ENCODE measurements at regions of chr1 and their contacts with region 1.

Region 1: DNA sequence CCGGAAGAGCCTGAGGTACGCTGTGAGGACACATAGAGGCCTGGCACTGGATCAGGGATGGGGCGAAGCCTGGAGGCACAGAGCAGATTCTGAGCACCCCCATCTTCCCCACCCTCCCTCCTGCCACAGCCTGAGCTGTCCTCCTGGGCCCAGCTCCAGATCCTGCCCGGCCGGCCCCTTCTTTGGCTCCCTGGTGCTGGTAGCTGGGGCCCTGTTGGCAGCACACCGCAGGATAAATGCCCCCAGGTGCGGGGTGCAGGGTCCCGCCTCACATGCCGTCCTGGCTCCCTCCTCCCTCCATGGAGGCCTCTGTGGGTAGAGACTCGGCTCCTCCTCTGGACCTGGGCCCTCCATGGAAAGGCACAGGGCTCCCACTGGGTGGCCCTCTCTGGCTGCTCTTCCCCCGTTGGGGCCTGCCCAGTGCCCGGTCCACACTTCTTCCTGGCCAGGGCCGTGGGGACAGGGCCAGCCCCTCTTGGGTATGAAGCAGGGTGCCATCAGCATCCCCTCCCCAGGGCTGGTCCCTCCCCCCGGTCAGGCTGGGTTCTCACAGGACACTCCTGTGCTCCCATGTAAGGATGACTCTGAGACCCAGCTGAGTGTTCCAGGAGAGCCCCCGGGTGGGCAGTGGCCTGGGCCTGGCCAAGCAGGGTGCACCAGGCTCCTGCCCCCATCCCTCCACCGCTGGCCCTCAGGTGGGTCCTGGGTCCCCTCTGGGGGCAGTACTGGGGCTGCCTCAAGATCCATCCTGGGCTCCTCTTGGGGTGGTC is 1.1 kb upstream of the OBSCN start:
- DNase-seq: no peak
- ATAC-seq: no peak
- H3K4me3 ChIP-seq: no peak overlapping the region
- H3K4me3 Mint-ChIP-seq: no peak overlapping the region
- H3K27ac ChIP-seq: no peak overlapping the region
- H3K27ac Mint-ChIP-seq: no peak overlapping the region
- H3K4me1 ChIP-seq: no peaks in the 10 kb centered on the region
- H3K4me1 Mint-ChIP-seq: no peaks in the 10 kb centered on the region
- H3K27me3 ChIP-seq: peaks cover 0 to 5% of the 10 kb centered on the region in 2 experiments
- H3K27me3 Mint-ChIP-seq: peaks cover 20% of the 10 kb centered on the region
- CTCF ChIP-seq: no peak

Region 2: GRCh38 chr1:228154670-228155571 is 51.8 kb before region 1 on chr1:
- CTCF ChIA-PET with region 1: no interaction called
- POLR2A ChIA-PET with region 1: no interaction called
- intact Hi-C with region 1: no loop called
- DNase-seq: peak in 1 of 14 experiments; percentile 44
- ATAC-seq: peak; percentile 82
- H3K4me3 ChIP-seq: no peak overlapping the region
- H3K4me3 Mint-ChIP-seq: peak overlapping the region; percentile 14
- H3K27ac ChIP-seq: no peak overlapping the region
- H3K27ac Mint-ChIP-seq: peak overlapping the region; percentile 88
- H3K4me1 ChIP-seq: peaks cover 15% of the 10 kb centered on the region
- H3K4me1 Mint-ChIP-seq: peaks cover 12% of the 10 kb centered on the region
- H3K27me3 ChIP-seq: no peaks in the 10 kb centered on the region
- H3K27me3 Mint-ChIP-seq: no peaks in the 10 kb centered on the region
- CTCF ChIP-seq: no peak

Region 3: DNA sequence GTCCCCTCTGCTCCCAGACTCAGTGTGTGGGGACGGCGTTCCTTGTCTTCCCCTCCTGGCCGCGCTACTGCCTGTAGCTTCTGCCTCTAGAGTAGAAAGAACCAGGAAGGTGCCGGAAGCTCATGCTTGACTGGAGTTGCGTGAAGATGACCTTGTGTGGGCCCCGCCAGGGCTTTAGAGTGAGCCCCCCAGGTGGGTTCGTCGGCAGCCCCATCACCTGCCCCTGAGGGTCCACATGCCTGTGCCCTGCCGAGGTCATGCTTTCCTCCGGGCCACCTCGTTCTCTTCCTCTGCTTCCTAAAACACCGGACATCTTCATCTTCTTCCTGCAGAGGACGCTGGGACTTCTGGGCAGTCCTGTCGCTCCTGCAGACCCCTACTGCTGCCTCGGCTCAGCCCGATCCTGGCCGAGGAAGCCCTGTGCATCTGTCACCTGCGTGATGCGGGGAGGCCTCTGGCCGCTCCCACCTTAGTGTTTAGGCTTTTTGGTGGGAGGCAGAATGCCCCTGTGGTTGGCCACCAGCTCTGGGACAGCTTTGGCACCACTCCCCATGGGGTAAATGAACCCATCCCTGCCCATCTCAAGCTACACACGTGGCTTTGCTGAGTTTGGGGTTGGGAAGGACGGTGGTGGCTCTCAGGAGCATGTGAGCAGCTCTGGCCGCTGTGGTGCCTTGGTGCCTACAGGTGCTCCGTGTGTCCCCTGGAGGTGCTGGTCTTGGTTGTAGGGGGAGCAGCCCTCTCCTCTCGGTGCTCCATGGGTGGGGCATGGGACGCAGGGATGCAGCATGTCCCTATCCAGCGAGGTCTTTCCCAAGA is 13.4 kb after region 1 on chr1:
- CTCF ChIA-PET with region 1: no interaction called
- POLR2A ChIA-PET with region 1: no interaction called
- intact Hi-C with region 1: loop called in 1 of 2 experiments (anchors 2 kb)
- DNase-seq: no peak
- ATAC-seq: no peak
- H3K4me3 ChIP-seq: no peak overlapping the region
- H3K4me3 Mint-ChIP-seq: no peak overlapping the region
- H3K27ac ChIP-seq: no peak overlapping the region
- H3K27ac Mint-ChIP-seq: no peak overlapping the region
- H3K4me1 ChIP-seq: no peaks in the 10 kb centered on the region
- H3K4me1 Mint-ChIP-seq: peaks cover 13% of the 10 kb centered on the region
- H3K27me3 ChIP-seq: no peaks in the 10 kb centered on the region
- H3K27me3 Mint-ChIP-seq: no peaks in the 10 kb centered on the region
- CTCF ChIP-seq: no peak

Region 4: DNA sequence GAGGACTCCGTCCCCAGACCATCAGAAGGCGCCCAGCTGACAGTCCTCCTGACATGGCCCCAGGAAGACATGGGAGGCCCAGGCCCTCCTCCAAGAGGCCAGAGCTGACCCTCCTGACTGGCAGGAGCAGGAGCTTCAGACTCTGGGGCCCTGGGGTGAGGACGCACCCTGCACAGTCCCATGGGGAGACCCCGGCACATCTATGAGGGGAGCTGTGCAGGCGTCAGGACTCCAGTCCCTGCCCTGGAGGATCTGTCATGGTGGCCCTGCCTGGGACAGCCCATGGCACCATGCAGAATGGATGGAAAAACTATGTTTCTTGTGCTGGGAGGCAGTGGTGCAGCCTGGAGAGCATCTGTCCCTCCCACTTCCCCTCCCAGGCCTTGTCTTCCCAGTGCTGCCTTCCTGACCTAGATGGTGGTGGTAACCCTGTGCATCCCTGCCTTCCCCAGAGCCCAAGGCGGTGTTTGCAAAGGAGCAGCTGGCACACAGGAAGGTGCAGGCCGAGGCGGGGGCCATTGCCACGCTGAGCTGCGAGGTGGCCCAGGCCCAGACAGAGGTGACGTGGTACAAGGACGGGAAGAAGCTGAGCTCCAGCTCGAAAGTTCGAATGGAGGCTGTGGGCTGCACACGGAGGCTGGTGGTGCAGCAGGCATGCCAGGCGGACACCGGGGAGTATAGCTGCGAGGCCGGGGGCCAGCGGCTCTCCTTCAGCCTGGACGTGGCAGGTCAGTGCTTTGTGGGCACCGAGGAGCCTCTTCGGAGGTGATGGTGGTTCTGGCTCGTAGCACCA is 42.9 kb after region 1 on chr1:
- CTCF ChIA-PET with region 1: no interaction called
- POLR2A ChIA-PET with region 1: no interaction called
- intact Hi-C with region 1: no loop called
- DNase-seq: no peak
- ATAC-seq: no peak
- H3K4me3 ChIP-seq: no peak overlapping the region
- H3K4me3 Mint-ChIP-seq: no peak overlapping the region
- H3K27ac ChIP-seq: no peak overlapping the region
- H3K27ac Mint-ChIP-seq: no peak overlapping the region
- H3K4me1 ChIP-seq: peaks cover 4% of the 10 kb centered on the region
- H3K4me1 Mint-ChIP-seq: peaks cover 18% of the 10 kb centered on the region
- H3K27me3 ChIP-seq: no peaks in the 10 kb centered on the region
- H3K27me3 Mint-ChIP-seq: no peaks in the 10 kb centered on the region
- CTCF ChIP-seq: no peak